Mucosa of descending colon (tissue), 3 donors: ENCODE measurements at regions of chr16 and their contacts with region 1.

Region 1: DNA sequence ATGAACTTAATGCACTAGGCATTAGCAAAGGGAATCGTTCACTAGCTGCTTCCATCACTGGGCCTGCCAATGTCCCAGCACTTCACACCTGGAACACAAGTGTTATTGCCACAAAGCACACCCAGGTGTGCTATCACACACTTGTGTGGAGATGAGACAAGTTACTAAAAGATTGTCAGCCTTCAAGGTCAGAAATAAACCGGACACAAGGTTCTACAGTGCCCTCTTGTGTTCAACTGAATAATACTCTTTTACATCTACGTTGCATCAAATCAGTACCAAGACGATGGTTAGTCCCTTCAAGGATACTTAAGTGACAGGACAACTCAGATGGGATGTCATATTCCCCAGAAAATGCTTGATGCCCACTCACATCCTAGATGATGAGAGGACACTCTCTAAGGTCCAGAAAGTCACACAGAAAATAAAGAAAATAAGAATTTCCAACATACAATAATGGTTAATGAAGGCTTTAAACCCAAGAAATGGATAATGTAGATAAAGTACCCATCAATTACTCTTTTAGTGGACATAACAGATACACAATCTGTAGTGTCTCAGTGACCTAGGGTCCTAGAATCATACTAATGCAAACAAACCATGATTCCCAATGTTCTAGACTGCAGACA is 16.4 kb upstream of the GLG1 start:
- DNase-seq: peak in 1 of 3 donors; percentile 15
- ATAC-seq: peak; percentile 81
- H3K4me3 ChIP-seq: no peak overlapping the region
- H3K4me1 ChIP-seq: no peaks in the 10 kb centered on the region
- CTCF ChIP-seq: peak; percentile 37

Region 2: DNA sequence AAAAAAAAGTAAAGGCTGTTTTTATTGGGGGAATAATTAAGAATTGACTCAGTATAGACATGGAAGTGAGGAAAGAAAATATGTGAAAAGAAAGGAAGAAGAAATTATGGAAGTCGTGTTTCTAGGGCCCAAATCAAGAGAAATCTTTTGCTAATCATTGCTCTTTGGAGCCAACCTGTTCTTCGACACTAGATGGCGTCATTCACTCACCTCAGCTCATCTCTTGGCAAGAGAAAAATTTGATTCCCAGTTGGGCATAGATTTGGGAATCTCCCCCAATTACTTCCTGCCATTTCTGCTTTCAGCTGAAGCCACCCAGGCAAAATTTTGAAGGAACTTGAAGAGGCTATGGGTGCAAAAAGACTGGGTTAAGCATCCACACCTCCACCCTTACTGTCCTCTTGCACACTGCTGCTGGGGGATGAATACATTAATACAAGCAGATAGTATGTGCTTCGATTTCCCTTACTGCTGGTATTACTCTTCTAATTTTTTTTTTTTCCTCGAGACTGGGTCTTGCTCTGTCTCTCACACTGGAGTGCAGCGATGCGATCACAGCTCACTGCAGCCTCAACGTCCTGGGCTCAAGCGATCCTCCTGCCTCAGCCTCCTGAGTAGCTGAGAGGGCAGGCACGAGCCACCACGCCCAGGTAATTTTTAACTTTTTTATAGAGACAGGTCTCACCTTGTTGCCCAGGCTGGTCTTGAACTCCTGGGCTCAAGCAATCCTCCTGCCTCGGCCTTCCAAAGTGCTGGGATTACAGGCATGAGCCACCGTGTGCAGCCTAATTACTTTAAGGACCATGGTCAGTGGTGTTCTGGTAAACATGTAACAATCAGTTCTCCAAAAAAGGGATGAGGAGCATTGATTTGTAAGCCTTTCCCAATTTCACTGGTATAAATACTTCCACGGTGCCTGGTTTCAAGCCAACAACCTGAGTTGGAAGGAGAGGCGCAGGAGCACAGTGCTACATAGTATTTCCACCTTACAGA is 313.2 kb before region 1 on chr16:
- intact Hi-C with region 1: loop called in 1 of 2 experiments (anchors 5 kb)
- DNase-seq: peak in 1 of 3 donors; percentile 53
- ATAC-seq: peak; percentile 75
- H3K4me3 ChIP-seq: no peak overlapping the region
- H3K4me1 ChIP-seq: no peaks in the 10 kb centered on the region
- CTCF ChIP-seq: peak; percentile 37

Region 3: GRCh38 chr16:74469946-74470478 is 153.3 kb before region 1 on chr16:
- intact Hi-C with region 1: loop called in 1 of 2 experiments (anchors 10 kb)
- DNase-seq: no peak
- ATAC-seq: no peak
- H3K4me3 ChIP-seq: no peak overlapping the region
- H3K4me1 ChIP-seq: no peaks in the 10 kb centered on the region
- CTCF ChIP-seq: no peak

Region 4: GRCh38 chr16:74691093-74691855 is 67.9 kb after region 1 on chr16:
- intact Hi-C with region 1: no loop called
- DNase-seq: no peak
- ATAC-seq: no peak
- H3K4me3 ChIP-seq: no peak overlapping the region
- H3K4me1 ChIP-seq: peaks cover 2% of the 10 kb centered on the region
- CTCF ChIP-seq: no peak